ENCODE measurements at regions of chr5 and their contacts with region 1.

Region 1: GRCh38 chr5:172420240-172420943 is 33.9 kb downstream of the SH3PXD2B start:
- DNase-seq: peak; percentile 90 to 91
- H3K4me3 ChIP-seq: peak overlapping the region; percentile 50
- H3K27ac ChIP-seq: peak overlapping the region; percentile 66
- H3K4me1 ChIP-seq: peaks cover 19% of the 10 kb centered on the region
- H3K27me3 ChIP-seq: no peaks in the 10 kb centered on the region
- CTCF ChIP-seq: no peak

Region 2: GRCh38 chr5:172437445-172438308 is 17.3 kb after region 1 on chr5:
- CTCF ChIA-PET with region 1: no interaction called
- POLR2A ChIA-PET with region 1: no interaction called
- intact Hi-C with region 1: loop called (anchors 2 kb)
- DNase-seq: peak; percentile 81 to 91
- H3K4me3 ChIP-seq: no peak overlapping the region
- H3K27ac ChIP-seq: peak overlapping the region; percentile 25; the same call in 1 of the 2 replicates
- H3K4me1 ChIP-seq: peaks cover 18% of the 10 kb centered on the region
- H3K27me3 ChIP-seq: no peaks in the 10 kb centered on the region
- CTCF ChIP-seq: no peak